Calu3 (cell line): ENCODE measurements at regions of chr15 and their contacts with region 1.

Region 1: GRCh38 chr15:89087830-89088604 is at the start of gene ABHD2:
- DNase-seq: peak; percentile 100
- H3K4me3 Mint-ChIP-seq: no peak within 1 kb of the TSS
- H3K27ac Mint-ChIP-seq: peak within 1 kb of the TSS; percentile 84
- H3K4me1 Mint-ChIP-seq: peaks cover 46% of the 10 kb centered on the region
- H3K27me3 Mint-ChIP-seq: no peaks in the 10 kb centered on the region
- CTCF ChIP-seq: no peak
- total RNA-seq, gene ABHD2: 300 and 353 TPM in 2 replicates

Region 2: GRCh38 chr15:89057504-89058133 is 30.4 kb before region 1 on chr15:
- CTCF ChIA-PET with region 1: interaction called, 11 read pairs
- intact Hi-C with region 1: loop called (anchors 2 kb)
- DNase-seq: peak; percentile 95
- H3K4me3 Mint-ChIP-seq: no peak overlapping the region
- H3K27ac Mint-ChIP-seq: peak overlapping the region; percentile 30
- H3K4me1 Mint-ChIP-seq: peaks cover 47% of the 10 kb centered on the region
- H3K27me3 Mint-ChIP-seq: no peaks in the 10 kb centered on the region
- CTCF ChIP-seq: peak; percentile 99

Region 3: DNA sequence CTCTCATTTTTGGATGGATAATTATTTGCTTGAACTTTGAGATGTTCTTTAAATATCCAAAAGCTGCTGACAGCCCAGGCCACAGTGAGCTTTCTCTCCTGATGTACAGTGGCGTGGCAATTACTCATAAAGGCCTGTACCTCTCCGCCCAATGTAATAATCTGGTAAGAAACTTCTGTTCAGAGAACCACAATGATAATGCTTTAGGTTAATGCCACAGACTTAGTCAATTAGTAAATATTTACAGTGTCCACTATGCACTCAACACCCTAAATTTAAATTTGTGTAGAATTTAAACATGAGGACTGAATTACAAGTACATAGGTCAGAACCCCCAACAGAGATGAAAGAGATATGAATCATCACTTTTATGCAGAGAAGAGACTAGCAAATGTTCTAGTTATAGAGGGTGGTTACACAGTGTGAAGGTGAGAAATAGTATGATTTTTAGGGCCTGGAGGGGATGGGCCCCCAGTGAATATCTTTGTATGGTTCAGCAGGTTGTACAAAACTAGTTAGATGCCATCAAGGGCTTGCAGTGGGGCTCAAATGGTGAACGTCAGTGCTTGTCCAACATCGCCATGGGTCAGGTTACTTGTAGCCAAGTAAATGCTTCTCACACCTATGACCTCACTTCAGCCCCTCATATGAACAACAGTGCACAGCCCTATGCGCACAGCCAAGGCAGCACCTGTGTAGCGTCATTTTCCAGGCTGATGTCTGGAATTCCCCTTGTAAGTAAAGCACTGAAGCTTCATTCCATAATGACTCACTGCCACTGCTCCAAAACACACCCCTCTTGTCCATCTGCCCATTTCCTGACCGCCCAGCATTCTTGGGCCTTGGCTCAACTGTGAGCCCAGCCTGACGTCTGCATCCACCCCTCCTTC is 13.5 kb after region 1 on chr15:
- CTCF ChIA-PET with region 1: interaction called, 38 read pairs
- intact Hi-C with region 1: loop called (anchors 1 kb)
- DNase-seq: peak; percentile 88
- H3K4me3 Mint-ChIP-seq: peak overlapping the region; percentile 1
- H3K27ac Mint-ChIP-seq: peak overlapping the region; percentile 69
- H3K4me1 Mint-ChIP-seq: peaks cover 66% of the 10 kb centered on the region
- H3K27me3 Mint-ChIP-seq: no peaks in the 10 kb centered on the region
- CTCF ChIP-seq: no peak

Region 4: DNA sequence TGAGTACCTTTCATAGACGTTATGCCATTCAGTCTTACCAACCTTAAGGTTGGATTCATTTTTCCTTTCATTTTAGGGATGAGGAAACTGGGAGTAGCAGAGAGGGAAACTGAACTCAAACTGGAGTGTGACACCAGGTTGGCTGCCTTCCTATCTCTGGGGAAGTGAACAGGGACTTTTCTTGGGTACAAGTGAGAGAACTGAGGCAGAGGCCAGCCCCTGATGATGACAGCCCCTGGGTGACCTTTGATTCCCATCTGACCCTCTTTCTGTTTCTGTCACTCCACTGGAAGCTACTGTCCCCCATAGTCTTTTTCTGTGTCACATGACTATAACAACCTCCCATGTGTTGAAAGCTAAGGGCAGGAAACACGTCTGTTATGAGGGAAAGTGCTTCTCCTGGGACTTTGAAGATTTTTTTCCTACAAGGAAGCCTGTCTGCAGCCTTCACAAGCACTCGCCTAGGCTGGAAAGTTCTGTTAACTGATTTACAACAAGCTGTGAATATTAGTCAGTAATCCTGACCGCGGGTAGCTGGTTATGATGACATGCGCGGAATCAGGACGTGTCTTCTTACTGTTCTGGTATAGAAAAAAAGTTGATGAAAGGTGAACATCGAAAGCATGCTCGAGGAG is 31.6 kb after region 1 on chr15:
- CTCF ChIA-PET with region 1: interaction called, 16 read pairs
- intact Hi-C with region 1: loop called (anchors 2 kb)
- DNase-seq: peak; percentile 62
- H3K4me3 Mint-ChIP-seq: peak overlapping the region; percentile 54
- H3K27ac Mint-ChIP-seq: peak overlapping the region; percentile 98
- H3K4me1 Mint-ChIP-seq: peaks cover 98% of the 10 kb centered on the region
- H3K27me3 Mint-ChIP-seq: no peaks in the 10 kb centered on the region
- CTCF ChIP-seq: no peak

Region 5: DNA sequence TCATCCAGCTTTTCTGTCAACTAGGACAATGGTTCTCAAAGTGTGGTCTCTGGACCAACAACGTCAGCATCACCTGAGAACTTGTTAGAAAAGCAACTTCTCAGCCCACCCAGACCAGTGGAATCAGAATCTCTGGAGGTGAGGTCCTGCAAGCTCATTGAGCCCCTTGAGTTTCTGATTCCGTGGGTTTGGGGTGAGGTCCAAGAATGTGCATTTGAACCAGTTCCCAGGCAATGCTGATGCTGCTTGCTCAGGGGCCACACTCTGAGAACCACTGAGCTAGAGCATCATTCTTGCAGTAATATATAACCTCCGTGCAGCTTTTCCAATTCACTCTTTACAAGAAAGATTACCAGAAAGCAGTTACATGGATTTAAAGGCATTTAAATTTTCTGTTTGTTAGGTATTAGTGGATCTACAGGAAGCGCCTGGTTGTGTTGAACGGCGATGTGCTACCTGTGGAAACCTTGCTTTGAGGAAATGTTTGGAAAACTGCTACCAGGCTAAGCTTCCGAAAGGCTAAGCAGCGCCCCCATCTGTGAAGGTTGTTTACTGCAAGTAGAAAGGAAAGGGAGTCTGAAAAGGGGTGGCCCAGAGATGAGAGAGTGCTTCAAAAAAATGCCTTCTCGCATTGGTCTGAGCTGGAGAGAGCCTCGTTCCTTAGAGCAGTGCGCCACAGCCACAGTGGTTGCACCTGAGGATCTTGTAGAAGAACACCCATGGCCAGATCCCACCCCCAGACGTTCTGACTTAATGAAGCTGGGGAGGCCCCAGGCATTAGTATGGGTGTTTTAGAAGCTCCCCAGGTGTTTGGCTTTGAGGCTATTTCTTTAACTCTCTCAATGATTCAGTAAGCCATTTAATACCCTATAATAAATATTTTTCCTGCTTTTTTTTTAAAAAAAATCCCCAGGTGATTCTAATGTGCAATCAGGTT is 83.4 kb after region 1 on chr15:
- CTCF ChIA-PET with region 1: interaction called, 8 read pairs
- intact Hi-C with region 1: loop called (anchors 2 kb)
- DNase-seq: peak; percentile 80
- H3K4me3 Mint-ChIP-seq: no peak overlapping the region
- H3K27ac Mint-ChIP-seq: no peak overlapping the region
- H3K4me1 Mint-ChIP-seq: peaks cover 35% of the 10 kb centered on the region
- H3K27me3 Mint-ChIP-seq: no peaks in the 10 kb centered on the region
- CTCF ChIP-seq: peak; percentile 81